ENCODE measurements at regions of chr1 and their contacts with region 1.

Region 1: DNA sequence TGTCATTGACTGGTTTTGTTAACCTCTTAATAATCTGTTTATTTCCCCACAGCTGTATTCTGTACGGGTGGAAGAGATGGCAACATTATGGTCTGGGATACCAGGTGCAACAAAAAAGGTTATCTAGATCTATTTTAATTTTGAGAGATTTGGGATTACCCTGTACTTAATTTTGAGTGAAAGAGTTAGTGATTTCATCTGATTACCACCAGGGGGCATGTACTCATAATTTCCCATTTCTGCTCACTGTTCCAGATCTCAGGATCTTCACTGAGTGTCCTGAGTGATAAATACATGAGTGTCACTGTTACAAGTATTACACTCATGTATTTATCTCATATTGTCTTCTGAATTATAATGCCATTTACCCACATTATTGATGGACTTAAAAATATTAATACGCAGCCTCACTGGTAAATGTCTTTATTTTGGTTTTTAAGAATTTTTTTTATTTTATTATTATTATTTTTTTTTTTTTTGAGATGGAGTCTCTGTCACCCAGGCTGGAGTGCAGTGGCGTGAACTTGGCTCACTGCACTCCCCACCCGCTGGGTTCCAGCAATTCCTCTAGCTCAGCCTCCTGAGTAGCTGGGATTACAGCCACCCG is 27.4 kb downstream of the DTL start:
- DNase-seq: no peak
- ATAC-seq: peak; percentile 78; the same call in 1 of the 2 replicates
- H3K4me3 ChIP-seq: no peak overlapping the region
- H3K27ac ChIP-seq: no peak overlapping the region
- H3K4me1 ChIP-seq: no peaks in the 10 kb centered on the region
- H3K27me3 ChIP-seq: no peaks in the 10 kb centered on the region
- CTCF ChIP-seq: peak; percentile 70; the same call in 1 of the 2 replicates

Region 2: GRCh38 chr1:211885747-211886522 is 177.0 kb before region 1 on chr1:
- CTCF ChIA-PET with region 1: interaction called, 10 read pairs
- POLR2A ChIA-PET with region 1: no interaction called
- in situ Hi-C with region 1: no loop called
- intact Hi-C with region 1: no loop called
- DNase-seq: no peak
- ATAC-seq: no peak
- H3K4me3 ChIP-seq: no peak overlapping the region
- H3K27ac ChIP-seq: no peak overlapping the region
- H3K4me1 ChIP-seq: no peaks in the 10 kb centered on the region
- H3K27me3 ChIP-seq: no peaks in the 10 kb centered on the region
- CTCF ChIP-seq: no peak

Region 3: DNA sequence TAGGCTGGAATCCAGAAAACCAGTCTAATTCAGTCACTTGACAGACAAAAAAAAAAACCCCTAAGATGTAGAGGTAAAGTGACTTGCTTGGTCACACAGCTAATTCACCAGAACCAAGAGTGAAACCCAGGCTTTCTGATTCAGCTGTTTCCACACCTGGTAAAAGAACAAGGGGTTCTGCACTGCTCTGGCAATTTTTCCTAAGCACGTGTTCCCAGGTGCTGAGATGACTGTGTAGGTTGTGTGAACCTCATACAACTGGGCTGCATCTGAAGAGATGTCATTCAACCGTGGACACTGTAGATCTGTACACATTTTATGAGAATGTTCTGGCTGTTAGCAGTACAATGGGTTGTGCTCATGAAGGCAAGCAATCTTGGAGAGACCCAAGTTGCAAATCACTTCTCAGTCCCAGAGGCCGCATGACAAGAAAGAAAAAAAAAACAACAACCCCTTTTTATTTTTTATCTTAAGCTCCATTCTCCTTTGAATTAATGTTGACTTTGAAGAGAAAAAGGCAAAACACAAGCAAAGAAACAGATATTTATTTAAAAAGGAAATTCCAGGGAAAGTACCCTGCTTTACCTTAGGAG is 123.0 kb before region 1 on chr1:
- CTCF ChIA-PET with region 1: no interaction called
- POLR2A ChIA-PET with region 1: no interaction called
- in situ Hi-C with region 1: no loop called
- intact Hi-C with region 1: no loop called
- DNase-seq: no peak
- ATAC-seq: no peak
- H3K4me3 ChIP-seq: no peak overlapping the region
- H3K27ac ChIP-seq: no peak overlapping the region
- H3K4me1 ChIP-seq: no peaks in the 10 kb centered on the region
- H3K27me3 ChIP-seq: no peaks in the 10 kb centered on the region
- CTCF ChIP-seq: no peak

Region 4: GRCh38 chr1:212045981-212046380 is 17.0 kb before region 1 on chr1:
- CTCF ChIA-PET with region 1: no interaction called
- POLR2A ChIA-PET with region 1: interaction called, 14 read pairs
- in situ Hi-C with region 1: no loop called
- intact Hi-C with region 1: no loop called
- DNase-seq: no peak
- ATAC-seq: no peak
- H3K4me3 ChIP-seq: no peak overlapping the region
- H3K27ac ChIP-seq: no peak overlapping the region
- H3K4me1 ChIP-seq: peaks cover 4% of the 10 kb centered on the region
- H3K27me3 ChIP-seq: no peaks in the 10 kb centered on the region
- CTCF ChIP-seq: no peak

Region 5: DNA sequence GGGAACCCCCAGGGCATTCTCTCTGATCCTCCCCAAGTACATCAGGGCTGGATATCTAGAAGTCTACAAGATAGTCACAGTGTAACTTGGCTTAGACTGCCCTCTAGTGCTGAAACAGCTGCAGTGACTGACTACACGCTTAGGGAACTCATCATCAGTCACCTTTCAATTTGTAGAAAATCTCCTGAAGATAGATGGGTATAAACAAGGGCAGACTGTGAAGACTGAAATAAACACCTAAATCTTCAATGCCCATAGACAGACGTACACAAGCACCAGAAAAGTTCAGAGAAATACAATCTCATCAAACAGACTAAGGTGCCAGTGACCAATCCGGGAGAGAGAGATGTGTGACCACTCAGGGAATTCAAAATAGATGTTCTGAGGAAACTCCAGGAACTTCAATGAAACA is 305.1 kb after region 1 on chr1:
- CTCF ChIA-PET with region 1: interaction called, 4 read pairs
- POLR2A ChIA-PET with region 1: no interaction called
- in situ Hi-C with region 1: no loop called
- intact Hi-C with region 1: loop called (anchors 2 kb)
- DNase-seq: peak; percentile 42
- ATAC-seq: peak; percentile 97
- H3K4me3 ChIP-seq: no peak overlapping the region
- H3K27ac ChIP-seq: no peak overlapping the region
- H3K4me1 ChIP-seq: no peaks in the 10 kb centered on the region
- H3K27me3 ChIP-seq: no peaks in the 10 kb centered on the region
- CTCF ChIP-seq: peak; percentile 88